MCF 10A (cell line): ENCODE measurements at regions of chr13 and their contacts with region 1.

Region 1: GRCh38 chr13:75704579-75705320 is 68.6 kb downstream of the LMO7 start:
- DNase-seq: peak; percentile 69
- H3K4me3 Mint-ChIP-seq: peak overlapping the region; percentile 34
- H3K27ac Mint-ChIP-seq: peak overlapping the region; percentile 98
- H3K4me1 Mint-ChIP-seq: peaks cover 17% of the 10 kb centered on the region
- H3K27me3 Mint-ChIP-seq: no peaks in the 10 kb centered on the region
- CTCF ChIP-seq: peak; percentile 23

Region 2: DNA sequence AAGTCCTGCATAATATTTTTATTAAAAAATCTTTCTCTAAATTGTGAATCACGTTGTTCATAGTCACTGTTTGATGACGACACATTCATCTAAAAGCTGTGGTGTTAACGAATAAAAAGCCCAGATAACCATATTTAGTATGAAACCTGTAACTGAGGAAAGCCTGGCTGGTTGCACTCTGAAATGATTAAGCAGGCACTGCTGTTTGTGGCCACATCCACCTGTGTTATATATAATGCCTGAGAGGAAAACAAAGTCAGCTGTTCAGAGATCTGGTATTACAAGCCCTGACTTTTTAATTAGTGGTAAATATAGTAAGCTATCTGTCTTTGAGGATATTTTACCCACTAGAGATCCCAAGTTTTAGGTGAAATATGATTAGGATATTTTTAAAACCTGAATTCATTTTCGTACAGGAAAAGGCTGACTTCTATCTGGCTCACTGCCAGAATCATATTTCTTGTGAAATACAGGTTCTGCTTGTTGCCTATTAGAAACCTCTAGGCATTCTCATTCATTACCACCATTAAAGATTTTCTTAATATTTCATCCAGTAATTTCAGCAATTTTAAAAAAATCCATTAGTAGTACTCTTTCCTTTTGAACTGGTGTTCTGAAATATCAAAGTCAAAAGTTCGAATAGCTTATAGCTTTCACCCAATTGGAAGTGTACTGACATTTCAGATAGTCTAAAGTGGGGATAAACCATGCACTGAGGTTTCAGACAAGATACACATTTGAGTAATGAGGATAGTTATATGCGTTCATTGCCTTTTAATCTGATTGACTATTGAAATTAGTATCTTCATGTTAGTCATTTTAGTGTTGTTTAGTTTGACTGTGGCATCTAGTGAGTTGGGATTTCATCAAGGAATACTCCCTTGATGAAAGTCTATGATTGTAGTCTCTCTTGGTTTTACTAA is 11.1 kb after region 1 on chr13:
- CTCF ChIA-PET with region 1: interaction called, 29 read pairs
- POLR2A ChIA-PET with region 1: interaction called, 76 read pairs
- intact Hi-C with region 1: loop called (anchors 1 kb)
- DNase-seq: peak; percentile 71
- H3K4me3 Mint-ChIP-seq: no peak overlapping the region
- H3K27ac Mint-ChIP-seq: peak overlapping the region; percentile 91
- H3K4me1 Mint-ChIP-seq: peaks cover 9% of the 10 kb centered on the region
- H3K27me3 Mint-ChIP-seq: no peaks in the 10 kb centered on the region
- CTCF ChIP-seq: no peak

Region 3: DNA sequence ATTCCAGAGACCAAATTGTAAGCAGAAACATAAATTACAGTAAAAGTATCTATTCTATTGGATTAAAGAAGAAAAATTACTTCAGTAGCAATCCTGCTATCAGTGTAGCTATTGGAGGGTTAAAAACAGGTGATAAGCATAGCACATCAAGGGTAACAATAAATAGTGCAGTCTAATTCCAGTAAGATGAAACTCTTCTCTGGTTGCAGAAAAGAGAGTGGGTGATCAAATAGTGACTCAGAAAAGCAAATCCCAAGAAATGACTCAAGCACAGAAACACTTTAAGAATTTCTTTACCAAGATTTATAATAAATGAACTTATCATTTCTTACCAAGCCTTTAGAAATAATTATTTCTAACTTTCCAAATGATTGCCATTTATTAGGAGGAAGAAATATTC is 67.1 kb after region 1 on chr13:
- CTCF ChIA-PET with region 1: interaction called, 4 read pairs
- POLR2A ChIA-PET with region 1: interaction called, 10 read pairs
- intact Hi-C with region 1: loop called (anchors 2 kb)
- DNase-seq: peak; percentile 65
- H3K4me3 Mint-ChIP-seq: no peak overlapping the region
- H3K27ac Mint-ChIP-seq: peak overlapping the region; percentile 71
- H3K4me1 Mint-ChIP-seq: peaks cover 20% of the 10 kb centered on the region
- H3K27me3 Mint-ChIP-seq: no peaks in the 10 kb centered on the region
- CTCF ChIP-seq: no peak

Region 4: GRCh38 chr13:75934889-75935288 is 230.1 kb after region 1 on chr13:
- CTCF ChIA-PET with region 1: no interaction called
- POLR2A ChIA-PET with region 1: no interaction called
- intact Hi-C with region 1: no loop called
- DNase-seq: peak; percentile 43
- H3K4me3 Mint-ChIP-seq: no peak overlapping the region
- H3K27ac Mint-ChIP-seq: no peak overlapping the region
- H3K4me1 Mint-ChIP-seq: peaks cover 27% of the 10 kb centered on the region
- H3K27me3 Mint-ChIP-seq: no peaks in the 10 kb centered on the region
- CTCF ChIP-seq: no peak

Region 5: GRCh38 chr13:76239031-76239680 is 534.4 kb after region 1 on chr13:
- CTCF ChIA-PET with region 1: no interaction called
- POLR2A ChIA-PET with region 1: no interaction called
- intact Hi-C with region 1: no loop called
- DNase-seq: no peak
- H3K4me3 Mint-ChIP-seq: no peak overlapping the region
- H3K27ac Mint-ChIP-seq: no peak overlapping the region
- H3K4me1 Mint-ChIP-seq: no peaks in the 10 kb centered on the region
- H3K27me3 Mint-ChIP-seq: no peaks in the 10 kb centered on the region
- CTCF ChIP-seq: no peak